ENCODE measurements at regions of chr15 and their contacts with region 1.

Region 1: GRCh38 chr15:40160689-40161688 is at the start of gene BUB1B:
- DNase-seq: peak; percentile 95
- H3K4me3 Mint-ChIP-seq: no peak within 1 kb of the TSS
- H3K27ac Mint-ChIP-seq: no peak within 1 kb of the TSS
- H3K4me1 Mint-ChIP-seq: peaks cover 17% of the 10 kb centered on the region
- H3K27me3 Mint-ChIP-seq: no peaks in the 10 kb centered on the region
- total RNA-seq, gene BUB1B: 73.2 to 73.8 TPM

Region 2: GRCh38 chr15:40038638-40039543 is 122.1 kb before region 1 on chr15 and contains the start of gene SRP14:
- CTCF ChIA-PET with region 1: interaction called, 11 read pairs
- POLR2A ChIA-PET with region 1: interaction called, 46 read pairs
- DNase-seq: peak; percentile 94
- H3K4me3 Mint-ChIP-seq: peak within 1 kb of the TSS; percentile 100
- H3K27ac Mint-ChIP-seq: peak within 1 kb of the TSS; percentile 95
- H3K4me1 Mint-ChIP-seq: peaks cover 56% of the 10 kb centered on the region
- H3K27me3 Mint-ChIP-seq: no peaks in the 10 kb centered on the region
- total RNA-seq, gene SRP14: 150 to 153 TPM

Region 3: DNA sequence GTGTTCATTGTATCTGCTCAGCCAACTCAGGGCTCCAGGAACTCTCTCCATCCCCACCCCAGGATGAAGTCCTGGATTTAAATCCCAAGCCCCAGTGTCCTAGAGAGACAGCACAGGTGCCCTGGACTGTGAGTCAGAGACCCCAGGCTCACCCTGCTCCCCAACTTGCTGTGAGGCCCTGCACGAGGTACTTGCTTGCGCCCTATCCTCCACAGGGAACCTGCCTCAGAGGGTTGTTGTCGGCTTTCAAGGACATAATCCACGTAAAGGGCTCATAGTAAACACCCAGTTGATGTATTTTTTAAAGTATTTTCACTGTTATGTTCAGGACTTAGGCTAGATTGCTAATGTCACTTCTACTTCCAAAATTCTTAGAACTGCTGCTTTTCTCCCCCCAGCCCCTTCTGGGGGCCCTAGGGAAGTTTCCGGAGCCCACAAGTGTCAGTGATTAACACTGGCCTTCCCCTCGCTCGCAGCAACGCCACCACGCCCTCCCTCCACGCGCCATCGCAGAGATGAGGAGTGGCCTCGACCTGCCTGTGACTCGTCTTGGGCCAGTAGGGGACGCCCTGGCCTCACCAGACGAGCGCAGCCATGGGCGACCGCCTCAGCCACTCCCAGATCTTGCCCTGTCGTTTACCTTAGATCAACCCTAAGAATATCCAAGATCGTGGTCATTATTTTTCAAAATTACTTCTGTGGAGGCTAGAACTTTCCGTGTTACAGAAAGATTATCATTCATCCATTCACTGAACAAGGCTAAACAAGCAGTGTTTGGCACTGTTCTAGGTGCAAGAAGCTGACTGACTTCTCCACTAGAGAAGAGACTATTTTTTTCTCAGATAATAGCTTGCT is 116.0 kb before region 1 on chr15:
- CTCF ChIA-PET with region 1: interaction called, 48 read pairs
- POLR2A ChIA-PET with region 1: interaction called, 46 read pairs
- DNase-seq: peak; percentile 88
- H3K4me3 Mint-ChIP-seq: no peak overlapping the region
- H3K27ac Mint-ChIP-seq: peak overlapping the region; percentile 47
- H3K4me1 Mint-ChIP-seq: peaks cover 77% of the 10 kb centered on the region
- H3K27me3 Mint-ChIP-seq: no peaks in the 10 kb centered on the region

Region 4: GRCh38 chr15:40098489-40099261 is 62.3 kb before region 1 on chr15:
- CTCF ChIA-PET with region 1: no interaction called
- POLR2A ChIA-PET with region 1: interaction called, 13 read pairs
- DNase-seq: peak; percentile 81
- H3K4me3 Mint-ChIP-seq: peak overlapping the region; percentile 48
- H3K27ac Mint-ChIP-seq: peak overlapping the region; percentile 90
- H3K4me1 Mint-ChIP-seq: peaks cover 78% of the 10 kb centered on the region
- H3K27me3 Mint-ChIP-seq: no peaks in the 10 kb centered on the region

Region 5: DNA sequence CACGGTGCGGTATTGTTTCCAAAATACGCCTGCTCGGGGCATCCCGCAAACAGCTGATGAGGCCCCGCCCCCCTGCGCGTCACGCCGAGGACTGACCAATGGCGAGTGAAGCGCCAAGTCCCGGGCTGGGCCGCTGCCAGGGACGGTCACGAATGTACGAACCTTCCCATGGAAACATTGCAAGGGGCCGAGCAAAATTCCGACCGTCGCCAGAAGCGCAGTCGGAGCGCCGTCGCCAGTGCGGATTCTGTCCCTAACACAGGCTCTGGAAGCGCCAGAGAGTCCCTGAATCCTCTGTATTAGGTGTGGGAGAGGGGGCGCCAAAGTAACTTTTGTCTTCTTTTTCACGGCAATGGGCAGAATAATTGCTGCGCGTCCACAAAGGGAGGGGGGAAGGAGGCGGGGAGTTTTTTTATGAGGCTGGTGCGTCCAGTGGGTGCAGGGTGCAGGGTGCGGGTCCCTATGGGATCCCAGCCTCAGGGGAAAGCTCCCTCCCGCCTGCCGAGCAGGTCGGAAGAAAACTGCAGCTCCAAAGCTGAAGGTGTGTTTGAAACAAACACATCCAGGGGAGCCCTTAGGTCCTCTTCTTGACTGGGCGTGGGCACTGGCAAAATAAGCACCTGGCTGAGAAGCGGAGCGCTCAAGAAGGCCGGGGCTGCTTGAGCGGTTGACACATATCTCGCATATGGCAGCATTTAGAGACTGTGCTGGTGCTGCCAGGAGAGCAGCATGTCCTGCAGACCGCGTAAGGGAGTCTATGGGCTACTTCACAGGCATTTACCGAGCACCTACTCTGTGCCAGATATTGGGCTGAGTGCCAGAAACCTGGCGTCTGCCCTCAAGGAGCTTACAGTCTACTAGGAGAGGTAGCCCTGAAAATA is 51.9 kb before region 1 on chr15 and contains the start of gene BMF:
- CTCF ChIA-PET with region 1: interaction called, 45 read pairs
- POLR2A ChIA-PET with region 1: interaction called, 34 read pairs
- DNase-seq: peak; percentile 98
- H3K4me3 Mint-ChIP-seq: peak within 1 kb of the TSS; percentile 93
- H3K27ac Mint-ChIP-seq: peak within 1 kb of the TSS; percentile 73
- H3K4me1 Mint-ChIP-seq: peaks cover 48% of the 10 kb centered on the region
- H3K27me3 Mint-ChIP-seq: peaks cover 21% of the 10 kb centered on the region
- total RNA-seq, gene BMF: 25.7 to 30.2 TPM

Region 6: GRCh38 chr15:40115670-40116093 is 45.3 kb before region 1 on chr15:
- CTCF ChIA-PET with region 1: no interaction called
- POLR2A ChIA-PET with region 1: interaction called, 12 read pairs
- DNase-seq: peak; percentile 83
- H3K4me3 Mint-ChIP-seq: peak overlapping the region; percentile 45
- H3K27ac Mint-ChIP-seq: peak overlapping the region; percentile 92
- H3K4me1 Mint-ChIP-seq: peaks cover 31% of the 10 kb centered on the region
- H3K27me3 Mint-ChIP-seq: peaks cover 14% of the 10 kb centered on the region

Region 7: GRCh38 chr15:40175160-40175559 is 14.2 kb after region 1 on chr15:
- CTCF ChIA-PET with region 1: interaction called, 3 read pairs
- POLR2A ChIA-PET with region 1: interaction called, 20 read pairs
- DNase-seq: no peak
- H3K4me3 Mint-ChIP-seq: no peak overlapping the region
- H3K27ac Mint-ChIP-seq: no peak overlapping the region
- H3K4me1 Mint-ChIP-seq: peaks cover 12% of the 10 kb centered on the region
- H3K27me3 Mint-ChIP-seq: no peaks in the 10 kb centered on the region

Measured in activated CD4-positive, alpha-beta memory T cell treated with anti-CD3 and anti-CD28 coated beads, Interleukin-2, amount 10 ng/mL, durations not matched to agents 7 days and 5 days (primary cell).